Dorsolateral prefrontal cortex (tissue), 120 donors: ENCODE measurements at regions of chr11 and their contacts with region 1.

Region 1: DNA sequence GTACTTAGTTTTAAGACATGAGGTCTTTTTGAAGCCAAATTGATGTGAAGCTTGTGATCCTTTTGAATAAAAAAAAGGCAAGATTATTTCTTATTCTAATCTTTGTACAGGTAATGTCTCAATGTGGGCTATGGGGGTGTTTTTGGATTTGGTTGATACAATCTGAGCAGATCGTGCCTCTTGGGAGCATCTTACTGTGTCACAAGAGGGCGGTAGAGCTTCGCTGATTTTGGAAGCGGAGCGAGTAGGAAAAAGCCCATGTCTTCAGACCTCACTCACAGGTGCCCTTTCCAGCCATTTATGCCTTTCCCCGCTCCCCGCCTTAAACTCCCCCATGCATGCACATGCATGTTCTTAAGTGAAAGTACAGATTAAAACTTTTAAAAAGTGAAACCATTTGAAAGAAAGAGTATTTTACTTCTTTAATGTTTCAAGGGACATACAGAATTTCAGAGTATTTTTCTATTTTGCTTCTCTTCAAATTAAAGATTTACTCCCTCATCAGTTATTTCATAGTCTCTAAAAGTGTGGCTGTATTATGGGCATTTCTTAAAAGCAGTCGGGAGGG is 18.8 kb downstream of the DDX25 start:
- DNase-seq: peak; percentile 44 to 81 (median 67)
- H3K4me3 ChIP-seq: no peak overlapping the region
- H3K27ac ChIP-seq: peak overlapping the region in 1 of 59 donors; percentile 4
- H3K27me3 ChIP-seq: no peaks in the 10 kb centered on the region
- CTCF ChIP-seq: peak; percentile 41 to 92 (median 78)

Region 2: GRCh38 chr11:125592305-125593112 is 330.6 kb before region 1 on chr11 and contains the start of gene STT3A:
- intact Hi-C with region 1: no loop called
- DNase-seq: peak; percentile 97 to 100 (median 100)
- H3K4me3 ChIP-seq: peak within 1 kb of the TSS; percentile 60 to 96 (median 80)
- H3K27ac ChIP-seq: peak within 1 kb of the TSS; percentile 43 to 99 (median 93)
- H3K27me3 ChIP-seq: no peaks in the 10 kb centered on the region
- CTCF ChIP-seq: peak in 24 of 56 donors; percentile 7 to 51 (median 24)
- total RNA-seq, gene STT3A: 34.3 to 77.7 (median 52.4) TPM

Region 3: DNA sequence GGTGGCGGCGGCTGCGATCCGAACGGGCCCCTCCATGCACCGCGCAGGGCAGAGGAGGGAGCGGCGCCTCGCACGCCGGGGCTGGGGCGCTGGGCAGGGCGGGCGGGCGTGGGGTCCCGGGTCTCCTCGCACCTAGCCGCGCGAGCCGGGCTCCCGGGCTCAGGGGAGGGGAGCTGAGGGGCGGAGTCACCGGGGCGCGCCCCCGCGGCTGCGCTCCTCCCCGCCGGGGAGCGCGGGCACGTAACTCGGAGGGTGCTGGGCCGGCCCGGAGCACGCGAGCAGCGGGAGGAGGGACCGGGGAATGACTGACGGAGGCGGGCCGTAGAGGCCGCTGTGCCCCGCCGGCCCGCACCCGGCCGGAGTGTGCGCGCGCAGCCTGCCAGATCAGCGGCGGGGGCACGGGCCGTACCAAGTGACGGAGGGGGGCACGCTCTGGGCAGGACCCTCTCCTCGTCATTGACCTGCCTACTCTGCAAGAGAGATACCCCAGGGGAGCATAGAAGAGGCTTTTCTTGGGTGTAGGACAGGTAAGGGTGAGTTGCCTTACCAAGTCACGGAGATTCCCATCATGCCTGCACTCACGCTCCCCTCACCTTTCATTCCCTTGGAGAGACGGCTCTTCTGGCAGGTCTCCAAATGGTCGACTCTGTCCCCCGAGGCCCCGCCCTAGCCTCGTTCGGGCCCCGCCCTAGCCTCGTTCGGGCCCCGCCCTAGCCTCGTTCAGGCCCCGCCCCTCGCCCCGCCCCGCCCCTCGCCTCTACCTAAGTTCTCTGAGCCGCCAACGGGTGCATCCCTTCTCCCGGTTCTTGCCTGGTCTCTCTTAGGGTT is 139.8 kb after region 1 on chr11 and contains the start of gene CDON:
- intact Hi-C with region 1: loop called in 1 of 2 experiments (anchors 10 kb)
- DNase-seq: peak; percentile 69 to 95 (median 84)
- H3K4me3 ChIP-seq: peak within 1 kb of the TSS; percentile 54 to 96 (median 77)
- H3K27ac ChIP-seq: peak within 1 kb of the TSS in 52 of 59 donors; percentile 9 to 90 (median 72)
- H3K27me3 ChIP-seq: no peaks in the 10 kb centered on the region
- CTCF ChIP-seq: peak in 41 of 56 donors; percentile 7 to 55 (median 27)
- total RNA-seq, gene CDON: 10.0 to 38.0 (median 18.7) TPM

Region 4: DNA sequence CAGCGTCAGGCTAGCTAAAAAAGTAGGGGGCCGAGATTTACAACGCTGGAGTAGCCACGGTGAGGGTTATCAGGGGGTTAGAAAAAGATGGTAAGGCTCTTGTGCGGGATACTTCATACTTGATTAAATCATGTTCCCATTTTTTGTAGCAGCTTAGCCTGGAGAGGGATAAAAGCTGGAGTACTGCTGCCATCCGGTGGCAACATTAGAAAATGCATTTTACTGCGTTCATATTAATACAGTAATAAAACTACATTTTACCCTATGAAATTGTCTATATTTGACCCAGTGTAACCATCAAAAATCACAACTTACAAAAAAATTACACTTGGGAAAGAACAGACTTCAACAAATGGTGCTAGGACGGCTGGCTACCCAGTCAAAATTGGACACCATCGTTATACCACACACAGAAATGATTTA is 271.0 kb after region 1 on chr11:
- intact Hi-C with region 1: loop called (anchors 1 to 2 kb)
- DNase-seq: peak in 5 of 10 donors; percentile 20 to 63 (median 46)
- H3K4me3 ChIP-seq: peak overlapping the region in 1 of 59 donors; percentile 8
- H3K27ac ChIP-seq: no peak overlapping the region
- H3K27me3 ChIP-seq: no peaks in the 10 kb centered on the region
- CTCF ChIP-seq: peak; percentile 58 to 89 (median 78)